HepG2 (cell line): ENCODE measurements at regions of chr11 and their contacts with region 1.

Region 1: DNA sequence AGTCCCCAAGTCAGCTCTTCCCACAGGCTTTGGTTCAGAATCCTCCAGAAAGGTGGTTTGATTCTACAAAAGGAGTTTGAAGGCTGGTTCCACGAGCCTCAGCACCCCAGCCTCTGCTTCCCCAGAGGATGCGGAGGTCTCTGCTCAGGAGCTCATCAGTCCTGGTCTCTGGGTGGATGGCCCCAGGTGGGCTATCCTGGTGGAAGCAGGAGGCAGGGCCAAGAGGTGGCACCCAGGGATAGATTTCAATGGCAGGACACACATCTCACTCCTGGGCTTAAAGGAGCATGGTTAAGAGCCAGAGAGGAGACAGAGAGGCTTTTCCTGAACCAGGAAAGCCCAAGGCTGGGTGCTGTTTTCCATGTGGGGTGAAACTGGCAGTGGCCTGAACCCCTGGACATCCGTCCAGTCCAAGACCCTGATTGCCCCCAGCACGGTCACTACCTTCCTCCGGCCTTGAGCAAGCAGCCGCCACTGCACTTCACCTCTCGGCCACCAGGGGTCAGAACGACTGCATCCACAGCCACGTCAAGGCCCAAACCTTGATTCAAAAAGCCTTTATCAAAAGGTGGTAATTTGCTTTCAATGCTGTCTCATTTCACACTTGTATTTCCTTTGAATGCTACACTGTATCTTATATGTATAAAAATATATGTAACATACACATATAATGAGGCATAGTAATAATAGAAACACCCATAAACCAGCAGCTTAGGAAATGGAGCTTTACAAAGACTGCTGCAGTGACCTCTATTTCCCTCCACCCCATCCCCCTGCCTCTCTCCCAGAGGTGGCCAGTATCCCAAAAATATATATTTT is 19.3 kb upstream of the FXYD2 start:
- DNase-seq: no peak
- ATAC-seq: peak; percentile 83
- H3K4me3 ChIP-seq: no peak overlapping the region
- H3K27ac ChIP-seq: no peak overlapping the region
- H3K4me1 ChIP-seq: no peaks in the 10 kb centered on the region
- H3K27me3 ChIP-seq: peaks cover 8 to 27% of the 10 kb centered on the region in 2 experiments; a peak in 3 of 5 replicates
- CTCF ChIP-seq: peak; percentile 91
- EP300 ChIP-seq: no peak
- POLR2A ChIP-seq: no peak
- RAD21 ChIP-seq: peak; percentile 59; the same call in 1 of the 2 replicates

Region 2: DNA sequence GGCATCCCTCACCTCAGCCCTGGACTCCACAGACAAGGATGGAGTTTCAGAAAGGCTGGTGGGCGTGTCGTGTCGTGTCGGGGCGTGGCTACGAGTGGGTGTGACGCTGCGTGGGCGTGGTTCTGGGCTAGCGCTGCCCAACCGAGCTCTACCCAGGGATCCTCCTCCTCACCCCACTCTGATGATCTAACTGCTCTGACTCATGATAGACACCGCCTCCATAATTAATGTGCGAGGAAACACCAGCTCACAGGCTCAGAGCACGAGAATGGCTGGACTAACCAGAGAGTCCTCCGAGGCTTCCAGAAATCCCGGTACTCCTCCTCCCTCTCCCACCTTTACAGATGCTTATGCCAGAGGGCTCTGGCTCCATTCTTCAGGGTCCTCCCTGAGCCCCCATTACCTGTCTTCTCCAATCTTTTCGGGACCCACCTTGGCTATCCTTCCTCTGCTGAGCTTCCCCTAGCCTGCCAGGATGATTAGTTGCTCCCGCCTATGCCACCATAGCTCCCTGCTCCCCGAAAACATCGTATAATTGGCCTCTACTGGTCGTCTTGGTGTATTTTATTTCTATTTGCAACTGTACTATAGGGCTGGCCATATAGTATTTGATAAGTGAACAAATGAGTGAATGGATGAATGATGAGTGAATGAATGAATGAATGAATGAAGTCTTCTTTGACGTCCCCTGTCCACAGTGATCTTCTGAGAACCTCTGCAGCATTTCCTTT is 63.5 kb after region 1 on chr11:
- CTCF ChIA-PET with region 1: no interaction called
- POLR2A ChIA-PET with region 1: no interaction called
- in situ Hi-C with region 1: no loop called
- intact Hi-C with region 1: loop called (anchors 10 kb)
- DNase-seq: peak; percentile 12
- ATAC-seq: no peak
- H3K4me3 ChIP-seq: no peak overlapping the region
- H3K27ac ChIP-seq: no peak overlapping the region
- H3K4me1 ChIP-seq: no peaks in the 10 kb centered on the region
- H3K27me3 ChIP-seq: peaks cover 1 to 54% of the 10 kb centered on the region in 2 experiments
- CTCF ChIP-seq: no peak
- EP300 ChIP-seq: no peak
- POLR2A ChIP-seq: no peak
- RAD21 ChIP-seq: no peak